H1 (cell line): ENCODE measurements at regions of chr2 and their contacts with region 1.

Region 1: GRCh38 chr2:195318440-195319111 is 338.4 kb upstream of the SLC39A10 start:
- DNase-seq: no peak
- H3K4me3 ChIP-seq: no peak overlapping the region
- H3K27ac ChIP-seq: no peak overlapping the region
- H3K4me1 ChIP-seq: no peaks in the 10 kb centered on the region
- H3K27me3 ChIP-seq: no peaks in the 10 kb centered on the region
- CTCF ChIP-seq: peak in 2 of 3 experiments; percentile 30 to 39; a peak in 2 of 4 replicates
- EP300 ChIP-seq: no peak
- POLR2A ChIP-seq: no peak
- RAD21 ChIP-seq: peak; percentile 82 to 86

Region 2: GRCh38 chr2:194842871-194843270 is 475.7 kb before region 1 on chr2:
- CTCF ChIA-PET with region 1: no interaction called
- POLR2A ChIA-PET with region 1: no interaction called
- DNase-seq: no peak
- H3K4me3 ChIP-seq: no peak overlapping the region
- H3K27ac ChIP-seq: no peak overlapping the region
- H3K4me1 ChIP-seq: no peaks in the 10 kb centered on the region
- H3K27me3 ChIP-seq: no peaks in the 10 kb centered on the region
- CTCF ChIP-seq: no peak
- EP300 ChIP-seq: no peak
- POLR2A ChIP-seq: no peak
- RAD21 ChIP-seq: no peak

Region 3: DNA sequence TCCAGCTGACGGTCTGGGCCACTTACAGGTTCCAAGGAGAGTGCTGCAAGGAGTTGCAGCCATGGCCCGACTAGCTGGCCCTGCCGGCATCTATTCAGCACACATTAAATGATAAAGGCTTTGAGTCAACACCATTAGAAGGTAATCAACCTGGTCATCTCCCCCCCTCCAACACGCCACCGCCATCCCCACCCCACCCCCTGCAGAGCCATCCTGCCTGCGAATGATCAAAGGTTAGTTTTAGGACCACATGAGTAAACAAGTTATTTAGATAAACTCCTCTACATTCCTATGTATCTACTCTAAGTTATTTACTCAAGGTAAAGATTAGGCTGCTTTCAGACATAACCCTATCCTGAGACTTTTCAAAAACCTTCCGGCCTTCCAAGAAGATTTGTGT is 10.8 kb before region 1 on chr2:
- CTCF ChIA-PET with region 1: interaction called, 11 read pairs
- POLR2A ChIA-PET with region 1: no interaction called
- DNase-seq: peak in 1 of 2 experiments; percentile 15
- H3K4me3 ChIP-seq: no peak overlapping the region
- H3K27ac ChIP-seq: no peak overlapping the region
- H3K4me1 ChIP-seq: peaks cover 0 to 4% (median 1%) of the 10 kb centered on the region in 4 experiments; a peak in 3 of 7 replicates
- H3K27me3 ChIP-seq: no peaks in the 10 kb centered on the region
- CTCF ChIP-seq: no peak
- EP300 ChIP-seq: no peak
- POLR2A ChIP-seq: no peak
- RAD21 ChIP-seq: no peak